ENCODE measurements at regions of chr1 and their contacts with region 1.

Region 1: GRCh38 chr1:226062558-226063223 is at the start of gene H3-3A:
- DNase-seq: peak; percentile 100
- total RNA-seq, gene H3-3A: 303 to 370 TPM

Region 2: DNA sequence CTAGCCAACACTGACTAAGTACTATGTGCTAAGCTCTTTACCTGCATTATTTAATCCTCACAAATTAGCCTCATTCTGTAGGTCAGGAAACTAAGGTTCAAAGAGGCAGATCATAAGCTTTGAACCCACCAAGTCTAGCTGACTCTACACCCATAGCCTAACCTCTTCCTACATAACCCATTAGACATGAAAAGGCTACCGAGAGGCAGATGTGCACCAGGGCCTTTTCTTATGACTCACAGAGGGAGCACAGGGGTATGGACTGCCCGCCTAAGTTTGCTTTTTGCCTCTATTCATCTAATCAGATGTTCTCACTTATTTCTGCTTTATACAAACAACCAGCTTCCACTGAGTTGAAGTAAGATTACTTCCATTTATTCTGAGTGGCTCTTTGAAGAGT is 666.3 kb before region 1 on chr1:
- intact Hi-C with region 1: no loop called
- DNase-seq: no peak

Region 3: GRCh38 chr1:225866061-225866837 is 196.4 kb before region 1 on chr1:
- intact Hi-C with region 1: no loop called
- DNase-seq: no peak

Region 4: DNA sequence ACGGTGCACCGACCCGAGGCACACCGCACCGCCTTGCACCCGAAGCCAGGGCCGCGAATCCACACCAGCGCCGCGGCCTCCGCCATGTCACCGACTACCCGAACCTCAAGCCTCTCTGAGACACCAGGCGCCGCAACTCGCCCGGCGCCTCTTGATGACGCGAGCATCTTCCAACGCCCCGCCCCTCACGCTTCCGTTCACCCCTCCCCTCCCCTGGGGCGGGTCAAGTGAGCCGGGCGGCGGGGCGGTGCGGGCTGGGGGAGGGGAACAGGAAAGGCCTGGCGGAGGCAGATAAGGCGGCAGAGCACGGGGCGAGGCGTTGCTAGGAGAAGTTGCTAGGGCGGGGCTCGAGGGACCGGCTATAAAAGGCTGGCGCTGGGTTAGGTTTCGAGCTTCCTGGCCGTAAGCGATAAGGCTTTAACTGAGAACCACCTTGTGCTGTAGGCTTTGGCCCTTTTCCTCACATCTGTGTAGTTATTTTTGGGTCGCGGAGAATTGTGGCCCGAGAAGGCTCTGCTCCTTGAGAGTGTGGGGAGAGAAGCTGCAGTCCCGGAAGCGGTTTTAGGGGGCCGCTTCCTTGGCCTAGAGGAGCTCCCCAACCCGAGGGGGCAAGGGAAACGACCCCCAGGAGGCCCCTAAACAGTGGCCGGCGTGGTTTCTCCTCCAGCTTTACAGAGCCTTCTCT is 63.3 kb before region 1 on chr1 and contains the start of gene SDE2:
- intact Hi-C with region 1: loop called in 1 of 2 experiments (anchors 5 kb)
- DNase-seq: peak; percentile 100
- total RNA-seq, gene SDE2: 17.9 to 18.0 TPM

Region 5: GRCh38 chr1:226019572-226019971 is 43.1 kb before region 1 on chr1:
- intact Hi-C with region 1: no loop called
- DNase-seq: no peak

Region 6: DNA sequence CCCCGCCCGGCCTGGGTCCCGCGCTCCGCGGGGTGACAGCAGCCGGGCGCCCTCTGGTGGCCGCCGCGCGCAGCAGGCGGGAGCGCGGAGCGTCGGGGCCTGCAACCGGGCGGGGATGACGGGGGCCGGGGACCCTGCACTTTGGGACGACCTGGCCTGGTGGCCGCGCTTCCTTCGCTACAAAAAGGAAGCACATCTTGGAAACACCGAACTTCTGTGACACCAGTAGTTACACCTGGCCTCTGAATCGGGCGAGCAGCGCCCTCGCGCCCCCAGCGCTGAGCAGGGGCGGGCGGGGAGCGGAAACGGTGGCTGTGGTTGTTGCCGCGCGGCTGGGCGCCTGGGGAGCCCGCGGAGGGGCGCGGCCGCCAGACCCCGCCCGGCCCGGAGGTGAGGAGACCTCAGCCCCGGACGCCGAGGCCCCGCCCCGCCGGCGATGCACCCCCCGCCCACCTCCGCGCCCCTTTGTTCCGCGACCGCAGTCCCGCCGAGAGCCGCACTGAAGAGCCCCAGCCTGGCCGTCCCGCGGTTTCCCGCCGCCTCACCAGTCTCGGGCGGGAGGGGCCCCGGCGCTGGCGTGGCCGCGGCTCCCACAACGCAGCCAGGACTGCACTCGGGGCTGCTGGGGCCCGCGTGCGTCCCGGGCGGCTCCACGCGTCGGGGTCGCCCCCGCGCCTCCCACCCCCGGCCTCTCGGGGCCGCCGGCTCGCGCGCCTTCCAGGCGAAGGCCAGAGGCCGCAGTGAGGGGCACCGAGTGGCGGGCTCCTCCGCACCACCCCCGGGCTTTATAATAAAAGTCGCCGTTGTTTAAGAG is 59.1 kb after region 1 on chr1:
- intact Hi-C with region 1: loop called (anchors 2 kb)
- DNase-seq: peak; percentile 88